ENCODE measurements at regions of chr14 and their contacts with region 1.

Region 1: DNA sequence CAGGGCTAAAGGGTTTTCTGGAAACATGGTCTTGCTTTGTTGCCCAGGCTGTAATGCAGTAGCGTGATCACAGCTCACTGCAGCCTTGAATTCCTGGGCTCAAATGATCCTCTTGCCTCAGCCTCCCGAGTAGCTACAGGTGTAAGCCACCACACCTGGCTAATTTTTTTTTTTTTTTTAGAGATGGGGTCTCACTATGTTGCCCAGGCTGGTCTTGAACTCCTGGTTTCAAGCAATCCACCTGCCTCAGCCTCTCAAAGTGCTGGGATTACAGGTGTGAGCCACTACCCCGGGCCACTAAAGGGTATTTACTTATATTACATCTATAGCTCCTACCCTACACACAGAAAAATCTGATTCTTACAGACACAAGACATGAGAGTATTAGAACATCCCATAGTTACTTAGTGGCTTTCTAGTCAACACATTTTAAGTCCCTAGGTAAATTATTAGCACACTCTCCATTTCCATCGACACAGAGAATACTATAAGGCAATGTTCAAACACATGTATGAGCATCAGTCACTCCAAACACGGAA is 6.2 kb upstream of the DCAF11 start:
- DNase-seq: no peak
- H3K4me3 ChIP-seq: no peak overlapping the region
- H3K27ac ChIP-seq: no peak overlapping the region
- H3K4me1 ChIP-seq: no peaks in the 10 kb centered on the region
- H3K27me3 ChIP-seq: no peaks in the 10 kb centered on the region
- CTCF ChIP-seq: no peak
- EP300 ChIP-seq: no peak
- POLR2A ChIP-seq: no peak
- RAD21 ChIP-seq: no peak

Region 2: GRCh38 chr14:24036169-24036962 is 72.0 kb before region 1 on chr14:
- CTCF ChIA-PET with region 1: interaction called, 12 read pairs
- POLR2A ChIA-PET with region 1: no interaction called
- DNase-seq: peak in 1 of 2 experiments; percentile 85
- H3K4me3 ChIP-seq: peak overlapping the region; percentile 45 to 73 (median 70)
- H3K27ac ChIP-seq: no peak overlapping the region
- H3K4me1 ChIP-seq: no peaks in the 10 kb centered on the region; a peak in 1 of 7 replicates
- H3K27me3 ChIP-seq: no peaks in the 10 kb centered on the region
- CTCF ChIP-seq: peak; percentile 75 to 82 (median 81)
- EP300 ChIP-seq: no peak
- POLR2A ChIP-seq: no peak
- RAD21 ChIP-seq: peak; percentile 51 to 69

Region 3: GRCh38 chr14:24051789-24052655 is 56.4 kb before region 1 on chr14 and contains the start of gene CARMIL3:
- CTCF ChIA-PET with region 1: interaction called, 142 read pairs
- POLR2A ChIA-PET with region 1: interaction called, 13 read pairs
- DNase-seq: peak in 1 of 2 experiments; percentile 89
- H3K4me3 ChIP-seq: peak within 1 kb of the TSS; percentile 56 to 82 (median 80)
- H3K27ac ChIP-seq: no peak within 1 kb of the TSS
- H3K4me1 ChIP-seq: peaks cover 0 to 10% (median 5%) of the 10 kb centered on the region in 4 experiments; a peak in 5 of 7 replicates
- H3K27me3 ChIP-seq: no peaks in the 10 kb centered on the region; a peak in 1 of 7 replicates
- CTCF ChIP-seq: no peak
- EP300 ChIP-seq: peak in 1 of 2 experiments; percentile 25; a peak in 1 of 3 replicates
- POLR2A ChIP-seq: no peak; a peak in 2 of 3 replicates
- RAD21 ChIP-seq: no peak
- total RNA-seq, gene CARMIL3: 8.5 and 9.0 TPM in 2 replicates

Region 4: GRCh38 chr14:24064091-24064749 is 44.2 kb before region 1 on chr14:
- CTCF ChIA-PET with region 1: interaction called, 142 read pairs
- POLR2A ChIA-PET with region 1: interaction called, 626 read pairs
- DNase-seq: no peak
- H3K4me3 ChIP-seq: no peak overlapping the region
- H3K27ac ChIP-seq: no peak overlapping the region
- H3K4me1 ChIP-seq: no peaks in the 10 kb centered on the region
- H3K27me3 ChIP-seq: no peaks in the 10 kb centered on the region; a peak in 1 of 7 replicates
- CTCF ChIP-seq: no peak
- EP300 ChIP-seq: no peak
- POLR2A ChIP-seq: no peak
- RAD21 ChIP-seq: no peak

Region 5: GRCh38 chr14:24080888-24081738 is 27.3 kb before region 1 on chr14:
- CTCF ChIA-PET with region 1: interaction called, 14 read pairs
- POLR2A ChIA-PET with region 1: interaction called, 626 read pairs
- DNase-seq: peak in 1 of 2 experiments; percentile 81
- H3K4me3 ChIP-seq: peak overlapping the region; percentile 54 to 67 (median 66)
- H3K27ac ChIP-seq: no peak overlapping the region
- H3K4me1 ChIP-seq: peaks cover 0 to 18% (median 12%) of the 10 kb centered on the region in 4 experiments; a peak in 6 of 7 replicates
- H3K27me3 ChIP-seq: peaks cover 0 to 10% (median 7%) of the 10 kb centered on the region in 4 experiments; a peak in 5 of 7 replicates
- CTCF ChIP-seq: no peak
- EP300 ChIP-seq: no peak
- POLR2A ChIP-seq: peak in 1 of 2 experiments; percentile 50; a peak in 1 of 3 replicates
- RAD21 ChIP-seq: no peak

Region 6: GRCh38 chr14:24141097-24141880 is 32.9 kb after region 1 on chr14 and contains the start of gene EMC9:
- CTCF ChIA-PET with region 1: interaction called, 4 read pairs
- POLR2A ChIA-PET with region 1: interaction called, 118 read pairs
- DNase-seq: peak; percentile 98 to 100
- H3K4me3 ChIP-seq: peak within 1 kb of the TSS; percentile 79 to 99 (median 94)
- H3K27ac ChIP-seq: peak within 1 kb of the TSS; percentile 92
- H3K4me1 ChIP-seq: peaks cover 4 to 13% (median 7%) of the 10 kb centered on the region in 4 experiments; a peak in 6 of 7 replicates
- H3K27me3 ChIP-seq: no peaks in the 10 kb centered on the region
- CTCF ChIP-seq: peak; percentile 23 to 48 (median 26); a peak in 3 of 4 replicates
- EP300 ChIP-seq: no peak
- POLR2A ChIP-seq: peak; percentile 81 to 84
- RAD21 ChIP-seq: no peak
- total RNA-seq, gene EMC9: 36.9 and 38.4 TPM in 2 replicates

Region 7: DNA sequence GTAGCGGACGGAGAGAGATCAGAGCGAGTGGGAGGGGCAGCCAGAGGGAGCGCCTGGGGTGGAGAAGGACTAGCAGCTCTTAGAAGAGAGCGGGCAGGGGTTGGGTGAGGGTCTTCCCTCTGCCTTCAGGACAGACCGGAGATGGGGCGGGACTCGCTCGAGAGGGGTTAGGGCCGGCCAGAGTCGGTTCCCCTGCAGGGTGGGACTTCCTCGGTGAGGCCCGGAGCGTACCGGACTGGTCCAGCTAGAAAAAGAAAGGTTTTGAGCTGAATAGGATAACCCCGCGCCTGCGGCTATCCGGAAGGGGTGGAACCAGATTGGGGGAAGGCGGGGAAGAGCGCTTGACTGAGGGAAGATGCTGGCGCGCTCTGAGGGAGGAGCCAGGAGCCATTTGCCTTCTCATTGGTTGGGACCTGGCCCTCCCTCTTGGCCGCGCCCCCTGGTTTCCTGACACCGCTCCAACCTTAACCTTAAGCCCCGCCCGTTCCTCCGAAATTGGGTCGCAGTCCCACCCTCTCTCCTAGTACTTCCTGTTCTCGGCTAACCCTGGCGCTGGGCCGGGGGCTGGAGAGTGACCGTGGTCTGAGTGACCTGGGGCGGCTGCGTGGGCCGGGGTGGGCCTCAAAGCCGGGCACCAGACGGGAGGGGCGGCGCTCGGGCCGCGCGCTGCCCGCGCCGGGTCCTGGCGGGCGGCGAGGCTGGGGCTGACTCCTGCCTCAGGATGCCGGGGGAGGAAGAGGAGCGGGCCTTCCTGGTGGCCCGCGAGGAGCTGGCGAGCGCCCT is 38.8 kb after region 1 on chr14 and contains the start of gene RNF31:
- CTCF ChIA-PET with region 1: interaction called, 9 read pairs
- POLR2A ChIA-PET with region 1: interaction called, 26 read pairs
- DNase-seq: peak; percentile 93 to 96
- H3K4me3 ChIP-seq: peak within 1 kb of the TSS; percentile 92 to 98 (median 96)
- H3K27ac ChIP-seq: peak within 1 kb of the TSS; percentile 45; the same call in 1 of the 2 replicates
- H3K4me1 ChIP-seq: peaks cover 0 to 10% (median 7%) of the 10 kb centered on the region in 4 experiments; a peak in 5 of 7 replicates
- H3K27me3 ChIP-seq: no peaks in the 10 kb centered on the region
- CTCF ChIP-seq: no peak
- EP300 ChIP-seq: no peak
- POLR2A ChIP-seq: peak in 1 of 2 experiments; percentile 55; a peak in 1 of 3 replicates
- RAD21 ChIP-seq: no peak
- total RNA-seq, gene RNF31: 57.8 and 72.0 TPM in 2 replicates

Region 8: DNA sequence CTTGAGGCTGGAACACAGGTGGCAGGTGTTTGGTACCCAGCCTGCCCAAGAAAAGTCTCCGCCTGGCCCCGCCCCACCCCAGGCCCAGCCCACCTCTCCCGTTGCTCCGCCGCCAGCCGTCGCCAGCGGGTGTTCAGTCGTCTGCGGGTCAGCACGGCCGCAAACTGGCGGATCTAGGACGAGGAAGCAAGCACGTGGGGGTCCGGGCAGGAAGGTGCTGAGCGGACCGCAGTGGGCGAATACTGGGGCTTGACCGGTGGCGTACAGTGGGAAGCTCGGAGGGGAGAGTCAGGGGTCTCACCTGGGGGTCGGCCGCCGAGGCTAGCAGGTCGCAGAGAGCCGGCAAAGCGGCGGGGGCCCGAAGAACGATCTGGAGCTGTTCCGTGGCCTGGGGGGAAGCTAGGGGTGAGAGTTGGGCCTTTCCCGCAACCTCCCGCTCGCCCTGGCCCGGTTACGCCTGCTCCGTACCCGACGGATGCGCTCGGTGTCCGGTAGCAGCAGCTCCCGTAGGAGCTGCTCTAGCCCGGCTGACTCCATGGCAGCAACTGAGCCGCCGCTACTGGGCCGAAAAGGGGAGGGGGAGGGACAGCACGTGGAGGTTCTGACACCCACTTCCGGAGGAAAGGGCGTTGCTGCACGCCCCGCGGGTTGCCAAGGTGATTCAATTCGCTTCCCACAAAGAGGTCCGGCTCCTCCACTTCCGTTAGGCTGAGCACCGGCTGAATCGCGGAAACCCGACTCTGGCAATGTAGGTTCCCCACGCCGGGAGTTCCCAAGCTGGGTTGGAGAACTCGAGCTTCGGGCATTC is 80.0 kb after region 1 on chr14 and contains the start of gene IPO4:
- CTCF ChIA-PET with region 1: no interaction called
- POLR2A ChIA-PET with region 1: no interaction called
- DNase-seq: peak; percentile 93 to 95
- H3K4me3 ChIP-seq: peak within 1 kb of the TSS; percentile 75 to 91 (median 87)
- H3K27ac ChIP-seq: peak within 1 kb of the TSS; percentile 58; the same call in 1 of the 2 replicates
- H3K4me1 ChIP-seq: peaks cover 0 to 7% (median 4%) of the 10 kb centered on the region in 4 experiments; a peak in 6 of 7 replicates
- H3K27me3 ChIP-seq: no peaks in the 10 kb centered on the region
- CTCF ChIP-seq: no peak; a peak in 1 of 4 replicates
- EP300 ChIP-seq: peak in 1 of 2 experiments; percentile 93; a peak in 1 of 3 replicates
- POLR2A ChIP-seq: peak in 1 of 2 experiments; percentile 91; a peak in 2 of 3 replicates
- RAD21 ChIP-seq: peak; percentile 24 to 37; a peak in 2 of 4 replicates
- total RNA-seq, gene IPO4: 108 and 109 TPM in 2 replicates

Region 9: GRCh38 chr14:24289649-24290249 is 181.3 kb after region 1 on chr14:
- CTCF ChIA-PET with region 1: no interaction called
- POLR2A ChIA-PET with region 1: no interaction called
- DNase-seq: no peak
- H3K4me3 ChIP-seq: no peak overlapping the region
- H3K27ac ChIP-seq: no peak overlapping the region
- H3K4me1 ChIP-seq: no peaks in the 10 kb centered on the region
- H3K27me3 ChIP-seq: no peaks in the 10 kb centered on the region
- CTCF ChIP-seq: no peak
- EP300 ChIP-seq: no peak
- POLR2A ChIP-seq: no peak
- RAD21 ChIP-seq: no peak

Measured in H1 (cell line).